CD4-positive, alpha-beta T cell (primary cell): ENCODE measurements at regions of chr9 and their contacts with region 1.

Region 1: GRCh38 chr9:126722252-126723078 is 82.4 kb upstream of the ZBTB43 start:
- DNase-seq: peak; percentile 76 to 95 (median 88)
- ATAC-seq: peak; percentile 53
- H3K4me3 ChIP-seq: peak overlapping the region; percentile 86
- H3K4me3 Mint-ChIP-seq: peak overlapping the region; percentile 97
- H3K27ac ChIP-seq: peak overlapping the region; percentile 93 to 97
- H3K27ac Mint-ChIP-seq: peak overlapping the region; percentile 96
- H3K4me1 ChIP-seq: peaks cover 46% of the 10 kb centered on the region
- H3K4me1 Mint-ChIP-seq: peaks cover 50% of the 10 kb centered on the region
- H3K27me3 ChIP-seq: no peaks in the 10 kb centered on the region
- H3K27me3 Mint-ChIP-seq: no peaks in the 10 kb centered on the region
- CTCF ChIP-seq: no peak

Region 2: GRCh38 chr9:126395439-126396212 is 326.8 kb before region 1 on chr9:
- CTCF ChIA-PET with region 1: no interaction called
- POLR2A ChIA-PET with region 1: no interaction called
- intact Hi-C with region 1: no loop called
- DNase-seq: peak in 4 of 14 experiments; percentile 13 to 36 (median 18)
- ATAC-seq: no peak
- H3K4me3 ChIP-seq: no peak overlapping the region
- H3K4me3 Mint-ChIP-seq: peak overlapping the region; percentile 25
- H3K27ac ChIP-seq: no peak overlapping the region
- H3K27ac Mint-ChIP-seq: peak overlapping the region; percentile 75
- H3K4me1 ChIP-seq: peaks cover 34% of the 10 kb centered on the region
- H3K4me1 Mint-ChIP-seq: peaks cover 42% of the 10 kb centered on the region
- H3K27me3 ChIP-seq: no peaks in the 10 kb centered on the region
- H3K27me3 Mint-ChIP-seq: no peaks in the 10 kb centered on the region
- CTCF ChIP-seq: no peak

Region 3: GRCh38 chr9:126611592-126612325 is 110.7 kb before region 1 on chr9:
- CTCF ChIA-PET with region 1: no interaction called
- POLR2A ChIA-PET with region 1: no interaction called
- intact Hi-C with region 1: no loop called
- DNase-seq: peak; percentile 40 to 78 (median 62)
- ATAC-seq: peak; percentile 73
- H3K4me3 ChIP-seq: no peak overlapping the region
- H3K4me3 Mint-ChIP-seq: peak overlapping the region; percentile 59
- H3K27ac ChIP-seq: no peak overlapping the region
- H3K27ac Mint-ChIP-seq: no peak overlapping the region
- H3K4me1 ChIP-seq: peaks cover 33% of the 10 kb centered on the region
- H3K4me1 Mint-ChIP-seq: peaks cover 12% of the 10 kb centered on the region
- H3K27me3 ChIP-seq: peaks cover 71 to 83% of the 10 kb centered on the region in 2 experiments
- H3K27me3 Mint-ChIP-seq: peaks cover 74% of the 10 kb centered on the region
- CTCF ChIP-seq: peak; percentile 74

Region 4: GRCh38 chr9:126733005-126733404 is 10.5 kb after region 1 on chr9:
- CTCF ChIA-PET with region 1: no interaction called
- POLR2A ChIA-PET with region 1: interaction called, 16 read pairs
- intact Hi-C with region 1: no loop called
- DNase-seq: no peak
- ATAC-seq: no peak
- H3K4me3 ChIP-seq: no peak overlapping the region
- H3K4me3 Mint-ChIP-seq: no peak overlapping the region
- H3K27ac ChIP-seq: no peak overlapping the region
- H3K27ac Mint-ChIP-seq: no peak overlapping the region
- H3K4me1 ChIP-seq: no peaks in the 10 kb centered on the region
- H3K4me1 Mint-ChIP-seq: no peaks in the 10 kb centered on the region
- H3K27me3 ChIP-seq: peaks cover 0 to 4% of the 10 kb centered on the region in 2 experiments
- H3K27me3 Mint-ChIP-seq: no peaks in the 10 kb centered on the region
- CTCF ChIP-seq: no peak

Region 5: GRCh38 chr9:126804696-126805545 is 82.5 kb after region 1 on chr9 and contains the start of gene ZBTB43:
- CTCF ChIA-PET with region 1: interaction called, 4 read pairs
- POLR2A ChIA-PET with region 1: interaction called, 25 read pairs
- intact Hi-C with region 1: loop called in 1 of 2 experiments (anchors 2 kb)
- DNase-seq: peak; percentile 97 to 99 (median 98)
- ATAC-seq: peak; percentile 85
- H3K4me3 ChIP-seq: peak within 1 kb of the TSS; percentile 75
- H3K4me3 Mint-ChIP-seq: peak within 1 kb of the TSS; percentile 99
- H3K27ac ChIP-seq: peak within 1 kb of the TSS; percentile 79 to 88
- H3K27ac Mint-ChIP-seq: peak within 1 kb of the TSS; percentile 96
- H3K4me1 ChIP-seq: peaks cover 19% of the 10 kb centered on the region
- H3K4me1 Mint-ChIP-seq: peaks cover 49% of the 10 kb centered on the region
- H3K27me3 ChIP-seq: no peaks in the 10 kb centered on the region
- H3K27me3 Mint-ChIP-seq: no peaks in the 10 kb centered on the region
- CTCF ChIP-seq: no peak
- total RNA-seq, gene ZBTB43: 47.7 to 50.8 TPM

Region 6: DNA sequence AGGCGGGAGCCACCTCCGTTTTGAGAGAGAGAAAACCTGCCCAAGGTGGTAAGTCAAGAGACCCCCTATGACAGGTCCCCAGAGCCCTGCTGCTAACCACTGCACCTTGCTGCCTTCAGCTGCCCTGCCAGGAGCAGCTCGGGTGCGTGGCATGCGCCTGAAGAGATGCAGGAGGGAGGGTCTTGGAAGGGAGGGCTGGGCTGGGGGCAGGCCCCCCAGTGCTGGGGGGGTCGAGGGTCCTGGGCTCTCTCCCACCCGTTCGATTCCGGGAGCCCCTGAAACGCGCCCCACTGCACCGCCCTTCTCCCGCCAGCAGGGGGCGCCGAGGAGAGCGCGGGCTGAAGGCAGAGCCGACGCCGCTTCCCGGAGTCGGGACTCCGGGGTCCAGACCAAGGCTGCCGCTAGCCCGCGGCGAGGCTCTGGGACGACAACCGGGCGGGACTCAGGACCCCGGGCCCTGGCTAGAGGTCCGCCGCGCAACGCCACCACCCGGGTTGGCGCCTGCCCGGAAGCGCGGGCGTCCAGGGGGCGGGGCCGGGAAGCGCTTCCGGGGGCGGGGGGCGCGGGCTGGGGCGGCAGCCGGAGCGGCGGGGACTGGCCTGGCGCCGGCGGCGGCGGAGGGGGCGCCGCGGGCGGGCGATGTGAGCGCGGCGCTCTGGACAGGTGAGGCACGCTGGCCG is 137.8 kb after region 1 on chr9 and contains the start of gene ZBTB34:
- CTCF ChIA-PET with region 1: no interaction called
- POLR2A ChIA-PET with region 1: no interaction called
- intact Hi-C with region 1: loop called in 1 of 2 experiments (anchors 5 kb)
- DNase-seq: peak; percentile 53 to 85 (median 72)
- ATAC-seq: peak; percentile 84
- H3K4me3 ChIP-seq: peak within 1 kb of the TSS; percentile 74
- H3K4me3 Mint-ChIP-seq: peak within 1 kb of the TSS; percentile 95
- H3K27ac ChIP-seq: peak within 1 kb of the TSS in 1 of 2 donors; percentile 22
- H3K27ac Mint-ChIP-seq: peak within 1 kb of the TSS; percentile 74
- H3K4me1 ChIP-seq: peaks cover 26% of the 10 kb centered on the region
- H3K4me1 Mint-ChIP-seq: peaks cover 31% of the 10 kb centered on the region
- H3K27me3 ChIP-seq: peaks cover 0 to 3% of the 10 kb centered on the region in 2 experiments
- H3K27me3 Mint-ChIP-seq: peaks cover 9% of the 10 kb centered on the region
- CTCF ChIP-seq: peak; percentile 100
- total RNA-seq, gene ZBTB34: 2.5 to 2.9 TPM

Region 7: DNA sequence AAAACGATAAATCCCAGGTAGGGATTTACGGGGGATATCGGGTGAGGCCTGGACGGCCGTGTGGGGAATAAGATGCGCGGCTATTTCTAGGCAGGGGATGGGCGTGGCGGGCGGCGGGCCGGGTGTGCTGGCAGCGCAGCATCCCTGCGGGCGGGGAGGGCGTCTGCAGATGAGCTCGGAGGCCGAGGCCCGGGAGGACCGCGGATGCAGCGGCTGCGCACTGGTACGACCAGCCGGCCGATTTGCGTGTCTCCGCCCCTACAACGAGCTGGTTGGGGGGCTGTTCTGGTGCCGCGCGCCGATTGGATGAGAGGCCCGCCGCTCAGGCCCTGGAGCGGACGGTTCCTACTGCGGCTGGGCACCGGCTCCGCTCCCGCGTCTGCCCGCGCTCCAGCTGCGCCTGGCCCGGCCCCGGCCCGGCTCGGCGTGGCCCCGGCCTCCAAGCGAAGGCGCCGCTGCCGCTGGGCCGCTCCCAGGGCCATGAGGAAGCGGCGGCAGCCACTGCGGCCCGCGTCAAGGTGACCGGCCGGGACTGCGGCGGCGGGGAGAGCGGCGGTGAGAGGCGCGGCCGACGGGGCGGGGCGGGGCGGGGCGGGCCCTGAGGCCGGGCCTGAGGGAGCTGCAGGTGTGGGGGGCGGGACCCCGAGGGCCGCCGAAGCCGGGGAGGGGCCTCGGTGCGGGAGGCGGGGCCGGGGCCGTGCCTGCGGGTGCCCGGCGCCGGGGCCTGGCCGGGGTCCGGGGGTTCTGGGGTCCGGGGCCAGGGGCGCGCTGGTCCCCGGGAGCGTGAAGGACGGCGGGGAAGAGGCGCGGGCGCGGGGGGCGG is 192.2 kb after region 1 on chr9 and contains the start of gene RALGPS1:
- CTCF ChIA-PET with region 1: no interaction called
- POLR2A ChIA-PET with region 1: no interaction called
- intact Hi-C with region 1: loop called in 1 of 2 experiments (anchors 10 kb)
- DNase-seq: peak; percentile 76 to 95 (median 84)
- ATAC-seq: peak; percentile 93
- H3K4me3 ChIP-seq: peak within 1 kb of the TSS; percentile 46
- H3K4me3 Mint-ChIP-seq: peak within 1 kb of the TSS; percentile 91
- H3K27ac ChIP-seq: no peak within 1 kb of the TSS
- H3K27ac Mint-ChIP-seq: no peak within 1 kb of the TSS
- H3K4me1 ChIP-seq: peaks cover 12% of the 10 kb centered on the region
- H3K4me1 Mint-ChIP-seq: peaks cover 7% of the 10 kb centered on the region
- H3K27me3 ChIP-seq: no peaks in the 10 kb centered on the region
- H3K27me3 Mint-ChIP-seq: no peaks in the 10 kb centered on the region
- CTCF ChIP-seq: no peak
- total RNA-seq, gene RALGPS1: 5.8 to 6.3 TPM